Heart right ventricle (tissue), 16 donors: ENCODE measurements at regions of chr7 and their contacts with region 1.

Region 1: DNA sequence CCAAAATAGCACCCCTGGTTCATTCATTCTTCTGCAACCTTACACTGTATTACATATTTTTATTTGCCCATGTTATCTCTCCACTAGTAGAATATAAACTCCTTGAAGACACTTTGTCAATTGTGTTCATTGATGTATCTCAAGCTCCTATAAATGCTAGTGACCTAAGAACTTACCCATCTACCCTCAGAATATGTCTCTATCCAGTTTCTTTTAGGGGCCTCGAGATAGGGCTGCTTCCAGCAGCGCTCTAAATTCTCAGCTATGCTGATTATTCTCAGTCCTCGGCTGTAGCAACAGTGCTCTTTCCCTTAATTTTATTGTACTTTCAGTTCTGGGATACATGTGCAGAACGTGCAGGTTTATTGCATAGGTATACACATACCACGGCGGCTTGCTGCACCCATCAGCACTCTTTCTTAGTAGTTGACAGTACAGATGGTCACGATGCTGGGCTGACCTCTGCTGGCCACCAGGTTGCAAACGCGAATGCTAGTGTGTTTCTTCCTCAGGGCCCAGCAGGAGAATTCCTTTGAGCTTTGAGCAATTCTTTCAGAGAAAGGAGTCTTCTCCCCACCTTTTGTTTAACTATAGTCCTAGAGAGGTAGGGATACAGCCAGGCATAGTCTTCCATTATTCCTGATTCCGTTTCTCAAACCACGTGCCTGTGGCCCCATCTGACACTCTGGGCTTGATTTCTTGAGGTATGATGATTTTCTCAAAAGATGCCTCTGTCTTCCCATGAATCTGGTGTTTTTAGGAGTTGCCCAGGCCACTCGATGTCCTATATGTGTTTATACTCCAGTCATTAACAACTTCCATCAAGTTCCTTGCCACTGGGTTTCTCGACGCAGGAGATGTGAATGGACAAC is 49.1 kb upstream of the CDC14C start:
- DNase-seq: peak; percentile 31 to 37
- ATAC-seq: peak in 5 of 8 donors; percentile 64 to 92 (median 67)
- H3K4me3 ChIP-seq: no peak overlapping the region
- H3K27ac ChIP-seq: no peak overlapping the region
- H3K4me1 ChIP-seq: no peaks in the 10 kb centered on the region
- H3K27me3 ChIP-seq: no peaks in the 10 kb centered on the region
- CTCF ChIP-seq: peak; percentile 10 to 73 (median 52)

Region 2: GRCh38 chr7:48299580-48300169 is 575.6 kb before region 1 on chr7:
- intact Hi-C with region 1: loop called in 7 of 10 experiments (anchors 2 to 10 kb)
- DNase-seq: peak in 1 of 2 donors; percentile 47
- ATAC-seq: peak in 5 of 8 donors; percentile 55 to 76 (median 64)
- H3K4me3 ChIP-seq: no peak overlapping the region
- H3K27ac ChIP-seq: no peak overlapping the region
- H3K4me1 ChIP-seq: no peaks in the 10 kb centered on the region
- H3K27me3 ChIP-seq: peaks cover 0 to 6% (median 0%) of the 10 kb centered on the region in 7 donors
- CTCF ChIP-seq: peak; percentile 38 to 76 (median 67)

Region 3: DNA sequence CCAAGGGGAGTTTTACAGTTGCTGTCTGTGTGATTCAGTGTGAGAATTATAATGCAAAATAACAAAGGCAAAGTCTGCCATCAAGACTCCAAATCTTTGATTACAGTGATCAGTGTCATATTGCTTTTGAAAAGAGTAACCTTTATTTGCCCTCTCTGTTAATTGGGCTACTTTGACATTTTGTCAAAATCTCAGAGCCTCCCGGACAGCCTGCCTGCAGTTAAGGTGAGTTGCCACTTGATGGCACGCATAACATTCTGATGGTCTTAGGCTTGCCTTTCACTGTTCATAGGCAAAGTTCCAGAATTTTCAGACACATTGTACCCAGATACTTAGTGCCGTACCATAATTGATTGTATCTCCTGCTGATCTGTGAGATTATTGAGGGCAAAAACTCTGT is 450.6 kb before region 1 on chr7:
- intact Hi-C with region 1: loop called in 7 of 10 experiments (anchors 5 to 10 kb)
- DNase-seq: no peak
- ATAC-seq: peak in 2 of 8 donors; percentile 34 to 56
- H3K4me3 ChIP-seq: no peak overlapping the region
- H3K27ac ChIP-seq: no peak overlapping the region
- H3K4me1 ChIP-seq: no peaks in the 10 kb centered on the region
- H3K27me3 ChIP-seq: peaks cover 0 to 3% (median 0%) of the 10 kb centered on the region in 7 donors
- CTCF ChIP-seq: peak in 8 of 9 donors; percentile 15 to 60 (median 44)

Region 4: DNA sequence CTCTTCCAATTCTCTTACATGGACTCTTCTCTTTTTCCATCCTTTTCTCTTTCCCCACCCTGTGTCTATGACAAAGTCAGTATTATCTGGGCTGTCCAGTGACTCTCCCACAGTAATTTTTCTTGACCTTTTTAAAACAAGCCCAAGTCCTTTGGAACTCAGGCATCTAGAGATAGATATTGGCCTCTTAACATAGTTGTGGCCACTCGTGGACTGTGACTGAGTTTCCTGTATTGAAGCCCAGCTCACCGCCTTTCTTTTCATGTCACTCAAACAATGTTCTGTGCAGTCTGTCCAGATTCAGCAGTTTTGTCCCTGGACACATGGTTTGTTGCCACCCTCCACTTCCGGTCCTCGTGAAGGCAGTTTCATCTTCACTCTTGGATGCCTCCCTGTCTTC is 61.8 kb before region 1 on chr7:
- intact Hi-C with region 1: no loop called
- DNase-seq: no peak
- ATAC-seq: no peak
- H3K4me3 ChIP-seq: no peak overlapping the region
- H3K27ac ChIP-seq: no peak overlapping the region
- H3K4me1 ChIP-seq: no peaks in the 10 kb centered on the region
- H3K27me3 ChIP-seq: no peaks in the 10 kb centered on the region
- CTCF ChIP-seq: no peak